CD4-positive, alpha-beta T cell (primary cell): ENCODE measurements at regions of chr11 and their contacts with region 1.

Region 1: GRCh38 chr11:96267496-96268032 is 75.4 kb downstream of the MAML2 start:
- DNase-seq: peak in 5 of 14 experiments; percentile 18 to 71 (median 66)
- ATAC-seq: peak; percentile 78
- H3K4me3 ChIP-seq: peak overlapping the region; percentile 25
- H3K4me3 Mint-ChIP-seq: peak overlapping the region; percentile 81
- H3K27ac ChIP-seq: peak overlapping the region; percentile 39 to 43
- H3K27ac Mint-ChIP-seq: peak overlapping the region; percentile 83
- H3K4me1 ChIP-seq: peaks cover 25% of the 10 kb centered on the region
- H3K4me1 Mint-ChIP-seq: peaks cover 84% of the 10 kb centered on the region
- H3K27me3 ChIP-seq: no peaks in the 10 kb centered on the region
- H3K27me3 Mint-ChIP-seq: no peaks in the 10 kb centered on the region
- CTCF ChIP-seq: no peak

Region 2: DNA sequence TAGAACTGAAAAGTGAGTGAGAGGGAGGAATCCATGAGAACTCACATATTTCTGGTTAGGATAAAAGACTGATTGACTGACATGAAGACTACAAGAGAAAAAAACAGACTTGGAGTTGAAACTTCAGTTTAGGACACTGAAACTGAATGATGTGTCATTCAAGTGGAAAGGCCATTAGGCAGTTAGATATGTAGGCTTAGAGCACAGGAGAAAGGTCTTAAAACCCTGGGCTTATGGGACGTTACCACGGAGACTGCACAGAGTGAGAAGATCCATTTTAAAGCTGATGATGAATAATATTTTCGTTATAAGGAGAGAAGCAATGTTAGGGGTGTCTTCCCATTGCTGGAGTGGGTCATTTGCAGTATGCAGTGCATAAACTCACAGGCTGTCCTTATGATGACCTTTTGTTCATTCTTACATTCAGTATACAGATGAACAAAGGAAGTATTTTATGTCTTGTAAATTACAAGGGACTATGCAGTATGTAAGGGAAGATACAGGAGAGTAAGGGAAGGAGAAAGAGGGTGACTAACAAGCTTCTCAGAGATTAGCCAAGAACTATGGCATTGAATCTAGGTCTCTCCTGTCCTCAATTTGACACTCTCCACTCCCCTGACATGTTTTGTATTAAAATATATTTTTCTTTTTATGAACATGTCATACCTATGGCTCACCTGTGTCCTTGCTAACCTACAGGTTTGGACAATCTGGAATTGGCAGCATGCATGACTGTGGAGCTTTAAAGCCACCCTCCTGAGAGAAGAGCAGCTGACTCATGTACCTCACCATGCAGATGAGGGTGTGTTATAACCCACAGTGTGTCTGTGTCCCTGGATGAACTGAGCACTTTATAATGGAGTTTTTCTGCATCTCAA is 11.7 kb after region 1 on chr11:
- CTCF ChIA-PET with region 1: no interaction called
- POLR2A ChIA-PET with region 1: interaction called, 13 read pairs
- intact Hi-C with region 1: no loop called
- DNase-seq: peak in 1 of 14 experiments; percentile 42
- ATAC-seq: peak; percentile 70
- H3K4me3 ChIP-seq: no peak overlapping the region
- H3K4me3 Mint-ChIP-seq: peak overlapping the region; percentile 18
- H3K27ac ChIP-seq: no peak overlapping the region
- H3K27ac Mint-ChIP-seq: peak overlapping the region; percentile 48
- H3K4me1 ChIP-seq: peaks cover 10% of the 10 kb centered on the region
- H3K4me1 Mint-ChIP-seq: peaks cover 75% of the 10 kb centered on the region
- H3K27me3 ChIP-seq: no peaks in the 10 kb centered on the region
- H3K27me3 Mint-ChIP-seq: no peaks in the 10 kb centered on the region
- CTCF ChIP-seq: no peak

Region 3: GRCh38 chr11:96506953-96507354 is 239.4 kb after region 1 on chr11:
- CTCF ChIA-PET with region 1: no interaction called
- POLR2A ChIA-PET with region 1: no interaction called
- intact Hi-C with region 1: no loop called
- DNase-seq: no peak
- ATAC-seq: no peak
- H3K4me3 ChIP-seq: no peak overlapping the region
- H3K4me3 Mint-ChIP-seq: no peak overlapping the region
- H3K27ac ChIP-seq: no peak overlapping the region
- H3K27ac Mint-ChIP-seq: no peak overlapping the region
- H3K4me1 ChIP-seq: no peaks in the 10 kb centered on the region
- H3K4me1 Mint-ChIP-seq: no peaks in the 10 kb centered on the region
- H3K27me3 ChIP-seq: no peaks in the 10 kb centered on the region
- H3K27me3 Mint-ChIP-seq: no peaks in the 10 kb centered on the region
- CTCF ChIP-seq: no peak